ENCODE measurements at regions of chr1 and their contacts with region 1.

Region 1: GRCh38 chr1:31669786-31670592 is 25.3 kb upstream of the PEF1 start:
- DNase-seq: no peak

Region 2: GRCh38 chr1:31633053-31633452 is 36.9 kb before region 1 on chr1:
- intact Hi-C with region 1: no loop called
- DNase-seq: no peak

Region 3: GRCh38 chr1:31705080-31705866 is 35.3 kb after region 1 on chr1:
- intact Hi-C with region 1: loop called in 1 of 2 experiments (anchors 5 kb)
- DNase-seq: peak; percentile 93

Region 4: DNA sequence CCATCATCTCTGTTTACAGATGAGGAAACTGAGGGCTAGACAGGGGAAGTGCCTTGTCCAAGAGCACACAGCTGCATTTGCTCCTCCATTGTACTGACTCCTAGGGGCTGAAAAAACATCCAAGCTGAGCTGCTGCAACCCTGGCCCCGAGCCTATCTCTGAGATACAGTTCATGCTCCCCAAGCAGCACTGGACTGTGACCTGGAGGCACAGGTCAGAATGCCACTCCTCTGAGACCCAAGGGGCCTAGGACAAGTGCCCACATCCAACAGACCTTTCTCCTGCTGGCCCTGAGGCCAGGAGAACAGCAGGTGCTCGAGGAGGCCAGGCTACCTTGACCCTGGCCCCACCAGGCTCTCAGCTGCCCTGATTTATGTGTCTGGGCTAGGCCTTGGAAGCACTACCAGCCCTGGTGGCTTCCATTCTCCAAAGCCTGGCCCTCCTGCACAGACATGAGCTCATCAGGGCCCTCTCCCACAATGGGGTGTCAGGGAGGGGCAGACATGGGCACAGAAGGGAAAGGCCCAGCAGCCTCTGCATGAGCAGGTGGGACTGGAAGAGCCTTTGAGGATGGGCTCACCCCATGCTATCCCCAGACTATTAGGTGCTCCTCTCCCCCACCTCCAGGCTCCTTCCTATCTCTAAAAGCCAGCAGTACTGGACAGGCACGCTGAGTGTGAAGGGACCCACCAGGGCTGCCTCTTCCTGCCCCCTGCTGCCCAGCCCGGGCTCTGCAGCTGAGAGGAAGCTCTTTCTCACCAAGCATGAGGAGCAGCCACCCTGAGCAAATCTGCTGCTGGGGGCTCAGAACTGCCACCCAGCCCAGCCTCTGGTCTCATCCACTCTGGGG is 75.3 kb after region 1 on chr1:
- intact Hi-C with region 1: loop called in 1 of 2 experiments (anchors 1 kb)
- DNase-seq: peak; percentile 89

Region 5: GRCh38 chr1:32972814-32973428 is 1302.9 kb after region 1 on chr1:
- intact Hi-C with region 1: loop called in 1 of 2 experiments (anchors 5 kb)
- DNase-seq: peak; percentile 85

Measured in posterior vena cava (tissue), 2 donors.